MCF 10A (cell line): ENCODE measurements at regions of chr2 and their contacts with region 1.

Region 1: GRCh38 chr2:133568172-133568571 is at the start of gene NCKAP5:
- DNase-seq: no peak
- H3K4me3 Mint-ChIP-seq: no peak within 1 kb of the TSS
- H3K27ac Mint-ChIP-seq: no peak within 1 kb of the TSS
- H3K4me1 Mint-ChIP-seq: peaks cover 9% of the 10 kb centered on the region
- H3K27me3 Mint-ChIP-seq: peaks cover 10% of the 10 kb centered on the region
- CTCF ChIP-seq: no peak
- total RNA-seq, gene NCKAP5: not detected in 2 replicates

Region 2: DNA sequence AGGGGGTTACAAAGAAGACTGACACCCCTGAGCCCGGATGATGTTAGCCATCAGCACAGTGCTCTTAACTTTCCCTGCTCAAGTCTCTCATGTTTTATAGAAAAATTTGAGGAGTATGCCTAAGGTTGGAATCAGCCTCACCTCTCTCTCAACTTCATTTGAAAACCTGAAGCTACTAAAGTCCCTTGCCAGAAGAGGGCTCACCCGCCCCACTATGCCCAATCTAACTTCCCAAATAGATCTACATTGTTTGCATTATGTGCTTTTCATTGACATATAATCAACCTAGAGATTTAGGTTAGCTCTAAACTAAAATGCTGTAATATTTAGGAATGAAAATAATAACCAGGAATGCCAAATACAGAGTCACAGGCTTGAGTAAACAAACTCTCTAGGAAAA is 305.3 kb before region 1 on chr2:
- CTCF ChIA-PET with region 1: interaction called, 18 read pairs
- POLR2A ChIA-PET with region 1: no interaction called
- intact Hi-C with region 1: no loop called
- DNase-seq: no peak
- H3K4me3 Mint-ChIP-seq: no peak overlapping the region
- H3K27ac Mint-ChIP-seq: no peak overlapping the region
- H3K4me1 Mint-ChIP-seq: no peaks in the 10 kb centered on the region
- H3K27me3 Mint-ChIP-seq: peaks cover 11% of the 10 kb centered on the region
- CTCF ChIP-seq: peak; percentile 35